ENCODE measurements at regions of chr17 and their contacts with region 1.

Region 1: GRCh38 chr17:79707931-79708891 is 22.5 kb upstream of the ENPP7 start:
- DNase-seq: no peak
- H3K4me3 ChIP-seq: no peak overlapping the region
- H3K27me3 ChIP-seq: no peaks in the 10 kb centered on the region
- CTCF ChIP-seq: peak; percentile 76

Region 2: GRCh38 chr17:79438546-79439334 is 269.5 kb before region 1 on chr17:
- CTCF ChIA-PET with region 1: no interaction called
- POLR2A ChIA-PET with region 1: no interaction called
- DNase-seq: no peak
- H3K4me3 ChIP-seq: no peak overlapping the region
- H3K27me3 ChIP-seq: no peaks in the 10 kb centered on the region
- CTCF ChIP-seq: no peak

Region 3: DNA sequence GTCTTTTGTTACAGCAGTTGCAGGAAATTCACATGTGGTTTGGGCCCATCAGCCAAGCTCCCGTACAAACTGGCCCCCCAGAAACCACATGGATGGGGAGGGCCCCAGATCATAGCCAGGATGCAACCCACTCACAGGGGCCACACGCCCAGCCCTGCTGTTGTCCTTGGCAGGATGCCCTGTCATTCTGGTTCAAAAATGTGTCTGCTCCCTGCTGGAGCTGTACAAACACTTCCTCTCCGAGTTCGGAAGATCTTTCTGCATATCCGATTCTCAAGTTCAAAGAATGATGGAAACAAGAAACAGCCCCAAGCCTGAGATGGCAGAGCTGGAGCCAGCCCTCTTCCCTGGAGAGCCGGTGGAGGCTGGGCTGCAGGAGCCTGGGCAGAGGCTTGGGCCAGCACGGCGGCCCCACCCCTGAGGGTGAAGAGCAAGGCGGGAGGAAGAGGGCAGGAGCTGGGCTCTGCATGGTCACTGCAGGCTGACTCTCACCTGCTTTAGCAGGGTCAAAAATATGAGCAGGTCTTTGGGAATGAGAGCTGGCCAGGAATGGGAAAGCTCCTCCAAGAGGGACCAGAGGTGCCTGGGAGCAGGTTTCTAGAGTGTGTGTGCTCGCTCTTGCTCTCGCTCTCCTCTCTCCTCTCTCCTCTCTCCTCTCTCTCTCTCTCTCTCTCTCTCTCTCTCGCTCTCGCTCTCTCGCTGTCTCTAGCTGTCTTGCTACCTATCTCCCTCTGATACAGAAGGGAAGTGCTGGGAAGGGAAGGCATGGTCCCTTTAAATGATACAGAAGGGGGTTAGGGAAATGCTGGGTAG is 12.2 kb before region 1 on chr17:
- CTCF ChIA-PET with region 1: interaction called, 10 read pairs
- POLR2A ChIA-PET with region 1: no interaction called
- DNase-seq: no peak
- H3K4me3 ChIP-seq: no peak overlapping the region
- H3K27me3 ChIP-seq: peaks cover 20% of the 10 kb centered on the region
- CTCF ChIP-seq: no peak

Region 4: GRCh38 chr17:79721993-79722671 is 13.9 kb after region 1 on chr17:
- CTCF ChIA-PET with region 1: interaction called, 13 read pairs
- POLR2A ChIA-PET with region 1: no interaction called
- DNase-seq: no peak
- H3K4me3 ChIP-seq: no peak overlapping the region
- H3K27me3 ChIP-seq: no peaks in the 10 kb centered on the region
- CTCF ChIP-seq: no peak

Region 5: GRCh38 chr17:79915850-79916430 is 207.7 kb after region 1 on chr17:
- CTCF ChIA-PET with region 1: no interaction called
- POLR2A ChIA-PET with region 1: no interaction called
- DNase-seq: no peak
- H3K4me3 ChIP-seq: no peak overlapping the region
- H3K27me3 ChIP-seq: peaks cover 6% of the 10 kb centered on the region
- CTCF ChIP-seq: peak; percentile 39